Cardiac septum (tissue), 1 donor: ENCODE measurements at regions of chr9 and their contacts with region 1.

Region 1: GRCh38 chr9:114180696-114181606 is 25.6 kb downstream of the COL27A1 start:
- DNase-seq: no peak

Region 2: GRCh38 chr9:114061830-114062474 is 119.0 kb before region 1 on chr9:
- intact Hi-C with region 1: no loop called
- DNase-seq: peak; percentile 29

Region 3: DNA sequence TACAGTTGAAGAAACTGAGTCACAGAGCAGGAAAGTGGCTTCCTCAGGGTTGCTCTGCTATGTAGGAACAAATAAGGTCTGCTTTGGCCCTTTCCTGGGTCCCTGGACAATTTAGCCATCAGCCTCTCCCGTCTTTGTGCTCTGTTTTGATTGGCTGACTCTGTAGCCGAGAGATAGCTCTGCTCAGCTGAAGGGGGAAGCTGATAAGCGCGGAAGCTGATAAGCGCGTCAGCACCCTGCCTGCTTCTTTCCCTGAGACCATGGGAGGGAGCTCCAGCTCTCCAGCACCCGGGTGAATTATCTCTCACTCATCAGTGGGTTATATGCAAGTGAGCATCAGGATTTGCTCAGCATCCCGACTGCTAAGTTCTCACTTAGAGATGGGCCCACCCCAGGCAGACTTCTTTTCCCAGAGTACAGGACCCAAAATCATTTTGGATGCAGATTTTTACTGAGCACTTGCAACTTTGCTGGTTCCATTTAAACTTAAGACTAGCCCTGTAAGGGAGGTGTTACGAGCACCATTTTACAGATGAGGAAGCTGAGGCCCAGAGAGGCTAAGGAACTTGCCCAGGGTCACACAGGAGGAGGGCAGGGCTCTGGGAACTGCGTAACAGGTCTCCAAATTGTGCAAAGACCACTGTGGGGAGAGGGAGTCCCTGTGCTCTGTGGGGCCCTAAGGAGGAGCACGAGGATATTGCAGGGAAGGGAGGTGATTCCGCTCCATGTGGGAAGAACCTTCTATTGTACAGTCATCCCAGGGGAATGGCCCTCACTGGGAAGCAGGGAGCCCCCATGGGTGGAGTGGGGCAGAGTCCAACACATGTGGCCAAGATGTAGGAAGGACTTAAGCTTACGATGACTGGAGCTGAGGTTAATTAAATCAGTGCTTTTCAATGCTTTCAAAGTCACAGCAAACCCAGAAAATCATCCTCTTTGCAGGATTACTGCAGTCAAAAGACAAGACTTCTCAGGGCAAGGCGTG is 58.2 kb after region 1 on chr9:
- intact Hi-C with region 1: loop called (anchors 2 kb)
- DNase-seq: no peak